ENCODE measurements at regions of chr5 and their contacts with region 1.

Region 1: DNA sequence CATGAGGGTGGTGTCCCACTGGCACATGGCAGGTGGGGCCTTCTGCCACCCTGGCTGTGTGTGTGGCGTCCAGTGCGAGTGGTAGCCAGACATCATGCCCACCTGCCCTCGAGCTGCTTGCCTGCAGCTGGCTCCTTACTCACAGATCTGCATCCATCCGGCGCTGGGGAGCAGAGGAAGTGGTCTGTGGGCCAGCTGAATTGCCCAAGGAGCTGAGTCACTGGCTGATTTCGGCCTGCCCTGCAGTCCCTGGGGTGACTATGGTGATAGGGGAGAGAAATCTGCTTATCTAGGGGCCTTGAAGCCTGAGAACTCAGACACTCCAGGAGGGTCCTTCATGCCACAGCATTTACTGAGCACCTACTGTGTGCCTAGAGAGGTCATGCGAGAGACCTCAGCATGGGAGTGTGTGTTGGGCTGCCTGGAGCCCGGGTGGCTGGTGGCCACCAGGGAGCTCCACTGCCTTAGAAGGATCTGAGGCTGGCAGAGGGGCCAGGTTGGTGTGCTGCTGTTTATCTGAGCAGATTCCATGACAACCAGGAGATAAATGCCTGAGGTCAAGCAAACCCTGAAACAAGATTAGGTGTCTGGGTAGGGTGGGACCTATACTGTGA is 57.1 kb downstream of the SLC22A5 start:
- DNase-seq: peak; percentile 37 to 83 (median 44)
- H3K4me3 ChIP-seq: peak overlapping the region; percentile 10 to 28
- H3K4me3 Mint-ChIP-seq: peak overlapping the region; percentile 67 to 83 (median 76)
- H3K27ac ChIP-seq: peak overlapping the region; percentile 77
- H3K27ac Mint-ChIP-seq: peak overlapping the region; percentile 96 to 99 (median 98)
- H3K4me1 ChIP-seq: peaks cover 100% of the 10 kb centered on the region
- H3K4me1 Mint-ChIP-seq: peaks cover 80 to 98% (median 94%) of the 10 kb centered on the region in 4 donors
- H3K27me3 ChIP-seq: no peaks in the 10 kb centered on the region
- H3K27me3 Mint-ChIP-seq: no peaks in the 10 kb centered on the region

Region 2: DNA sequence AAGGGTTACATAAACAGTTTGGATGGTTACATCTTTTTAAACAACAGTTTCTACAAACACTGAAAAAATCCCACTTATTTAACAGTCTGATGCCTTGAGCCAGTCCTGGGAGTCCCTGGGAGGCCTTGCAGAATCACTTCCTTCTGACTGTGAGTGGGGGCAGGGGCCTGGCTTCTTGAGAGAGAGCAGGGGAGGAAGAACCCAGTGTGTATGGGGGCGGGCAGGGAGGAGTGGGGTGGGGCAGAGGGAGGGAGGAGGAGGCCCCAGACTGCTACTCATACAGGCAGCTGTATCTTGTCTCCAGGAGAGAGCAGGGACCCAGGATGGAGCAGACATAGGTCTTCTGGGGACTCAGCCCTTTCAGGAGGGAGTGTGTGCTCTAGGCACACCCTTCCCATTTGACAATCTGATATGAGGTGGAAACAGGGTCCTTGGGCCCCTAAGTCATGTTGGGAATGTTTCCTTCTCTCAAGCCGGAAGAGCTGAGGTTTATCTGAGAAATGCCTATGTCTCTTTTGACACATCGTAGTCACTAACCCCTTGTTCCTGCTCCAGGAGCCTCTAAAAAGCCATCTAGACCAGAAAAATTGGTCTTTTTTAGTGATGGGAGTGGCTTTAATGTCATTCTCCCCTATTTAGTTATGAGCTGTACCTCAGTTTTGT is 11.1 kb after region 1 on chr5:
- CTCF ChIA-PET with region 1: interaction called, 48 read pairs
- POLR2A ChIA-PET with region 1: interaction called, 267 read pairs
- intact Hi-C with region 1: loop called (anchors 1 kb)
- DNase-seq: peak; percentile 49 to 75 (median 52)
- H3K4me3 ChIP-seq: peak overlapping the region; percentile 4 to 8
- H3K4me3 Mint-ChIP-seq: peak overlapping the region; percentile 52 to 85 (median 70)
- H3K27ac ChIP-seq: peak overlapping the region; percentile 60
- H3K27ac Mint-ChIP-seq: peak overlapping the region; percentile 89 to 96 (median 92)
- H3K4me1 ChIP-seq: peaks cover 99% of the 10 kb centered on the region
- H3K4me1 Mint-ChIP-seq: peaks cover 64 to 97% (median 83%) of the 10 kb centered on the region in 4 donors
- H3K27me3 ChIP-seq: no peaks in the 10 kb centered on the region
- H3K27me3 Mint-ChIP-seq: no peaks in the 10 kb centered on the region

Measured in CD4-positive, alpha-beta memory T cell (primary cell).